Transverse colon (tissue), 4 donors: ENCODE measurements at regions of chr3 and their contacts with region 1.

Region 1: DNA sequence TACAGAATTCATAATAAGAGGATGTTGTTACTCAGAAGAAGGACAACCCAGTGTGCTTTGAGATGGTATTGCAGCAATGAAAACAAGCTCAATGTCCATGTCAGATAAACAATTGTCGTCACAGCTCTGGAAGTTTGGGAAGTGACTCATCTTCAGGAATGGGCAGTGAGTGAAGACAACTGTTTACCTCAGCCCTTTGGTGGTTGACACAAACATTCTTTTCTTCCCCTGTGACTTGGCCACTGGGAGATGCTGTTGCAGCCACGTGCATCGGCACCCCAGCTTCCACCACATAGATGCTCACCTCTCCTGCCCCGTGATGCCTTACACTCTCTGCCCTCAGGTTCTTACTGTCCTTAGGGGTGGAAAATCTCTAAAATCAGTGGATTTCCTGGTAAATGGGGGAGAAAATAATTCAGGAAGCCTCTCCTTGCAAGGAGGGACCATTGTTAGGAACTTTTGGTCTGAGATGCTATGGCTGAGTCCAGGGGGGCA is 114.1 kb upstream of the GALNT15 start:
- DNase-seq: peak; percentile 30
- H3K4me3 ChIP-seq: no peak overlapping the region
- H3K27ac ChIP-seq: peak overlapping the region; percentile 54 to 76 (median 65)
- H3K4me1 ChIP-seq: peaks cover 0 to 12% (median 6%) of the 10 kb centered on the region in 4 donors
- H3K27me3 ChIP-seq: no peaks in the 10 kb centered on the region
- CTCF ChIP-seq: no peak
- EP300 ChIP-seq: peak; percentile 70
- POLR2A ChIP-seq: no peak

Region 2: DNA sequence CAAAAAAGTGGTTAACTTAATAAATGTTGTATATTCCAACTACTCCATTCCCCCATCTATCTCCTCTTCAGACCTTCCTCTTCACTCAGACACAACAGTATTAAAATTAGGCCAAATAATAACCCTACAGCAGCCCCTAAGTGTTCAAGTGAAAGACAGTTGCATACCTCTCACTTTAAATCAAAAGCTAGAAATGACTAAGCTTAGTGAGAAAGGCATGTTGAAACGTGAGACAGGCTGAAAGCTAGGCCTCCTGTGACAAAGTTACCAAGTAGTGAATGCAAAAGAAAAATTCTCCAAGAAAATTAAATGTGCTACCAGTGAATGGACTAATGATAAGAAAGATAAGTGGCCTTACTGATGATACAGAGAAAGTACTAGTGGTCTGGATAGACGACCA is 334.4 kb before region 1 on chr3:
- in situ Hi-C with region 1: no loop called
- intact Hi-C with region 1: no loop called
- DNase-seq: no peak
- H3K4me3 ChIP-seq: no peak overlapping the region
- H3K27ac ChIP-seq: no peak overlapping the region
- H3K4me1 ChIP-seq: no peaks in the 10 kb centered on the region
- H3K27me3 ChIP-seq: no peaks in the 10 kb centered on the region
- CTCF ChIP-seq: no peak
- EP300 ChIP-seq: no peak
- POLR2A ChIP-seq: no peak

Region 3: GRCh38 chr3:16177962-16178627 is 117.7 kb after region 1 on chr3:
- in situ Hi-C with region 1: loop called in 1 of 4 experiments (anchors 10 kb)
- intact Hi-C with region 1: no loop called
- DNase-seq: peak; percentile 79
- H3K4me3 ChIP-seq: peak overlapping the region in 1 of 4 donors; percentile 0
- H3K27ac ChIP-seq: no peak overlapping the region
- H3K4me1 ChIP-seq: peaks cover 0 to 16% (median 5%) of the 10 kb centered on the region in 4 donors
- H3K27me3 ChIP-seq: no peaks in the 10 kb centered on the region
- CTCF ChIP-seq: peak; percentile 88 to 97 (median 92)
- EP300 ChIP-seq: no peak
- POLR2A ChIP-seq: no peak